Endothelial cell of umbilical vein (primary cell): ENCODE measurements at regions of chr1 and their contacts with region 1.

Region 1: GRCh38 chr1:193143285-193143684 is 21.5 kb downstream of the CDC73 start:
- DNase-seq: peak; percentile 30
- H3K4me3 ChIP-seq: no peak overlapping the region
- H3K27ac ChIP-seq: no peak overlapping the region
- H3K4me1 ChIP-seq: peaks cover 9% of the 10 kb centered on the region
- H3K27me3 ChIP-seq: no peaks in the 10 kb centered on the region
- CTCF ChIP-seq: no peak
- POLR2A ChIP-seq: no peak

Region 2: GRCh38 chr1:193131266-193131860 is 11.9 kb before region 1 on chr1:
- CTCF ChIA-PET with region 1: interaction called, 14 read pairs
- POLR2A ChIA-PET with region 1: no interaction called
- dilution Hi-C with region 1: no loop called
- intact Hi-C with region 1: no loop called
- DNase-seq: no peak
- H3K4me3 ChIP-seq: no peak overlapping the region
- H3K27ac ChIP-seq: no peak overlapping the region
- H3K4me1 ChIP-seq: no peaks in the 10 kb centered on the region
- H3K27me3 ChIP-seq: no peaks in the 10 kb centered on the region
- CTCF ChIP-seq: no peak
- POLR2A ChIP-seq: no peak

Region 3: GRCh38 chr1:193156826-193157142 is 13.5 kb after region 1 on chr1:
- CTCF ChIA-PET with region 1: interaction called, 14 read pairs
- POLR2A ChIA-PET with region 1: no interaction called
- dilution Hi-C with region 1: no loop called
- intact Hi-C with region 1: no loop called
- DNase-seq: no peak
- H3K4me3 ChIP-seq: no peak overlapping the region
- H3K27ac ChIP-seq: no peak overlapping the region
- H3K4me1 ChIP-seq: no peaks in the 10 kb centered on the region
- H3K27me3 ChIP-seq: no peaks in the 10 kb centered on the region
- CTCF ChIP-seq: no peak
- POLR2A ChIP-seq: no peak

Region 4: DNA sequence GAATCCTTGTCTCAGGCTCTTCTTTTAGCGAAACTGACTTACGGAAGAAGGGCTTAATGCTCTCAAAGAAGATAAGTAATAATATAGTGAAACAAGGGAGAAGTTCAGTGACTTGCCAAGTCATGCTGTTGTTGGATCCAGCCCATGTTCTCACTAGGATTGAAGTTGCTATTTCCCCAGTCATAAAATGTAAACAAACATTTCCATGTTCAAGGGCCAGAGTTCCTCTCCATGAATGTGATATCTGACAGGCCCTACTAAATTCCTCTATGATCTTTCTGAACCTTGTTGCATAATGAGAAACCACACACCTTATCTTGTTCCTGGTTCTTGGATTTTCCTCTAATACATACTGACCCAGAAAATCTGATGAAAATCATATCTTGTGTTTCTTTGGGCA is 919.7 kb after region 1 on chr1:
- CTCF ChIA-PET with region 1: interaction called, 3 read pairs
- POLR2A ChIA-PET with region 1: no interaction called
- dilution Hi-C with region 1: no loop called
- intact Hi-C with region 1: loop called (anchors 1 kb)
- DNase-seq: peak; percentile 93
- H3K4me3 ChIP-seq: peak overlapping the region in 1 of 3 experiments; percentile 30
- H3K27ac ChIP-seq: peak overlapping the region; percentile 94
- H3K4me1 ChIP-seq: peaks cover 29% of the 10 kb centered on the region
- H3K27me3 ChIP-seq: no peaks in the 10 kb centered on the region
- CTCF ChIP-seq: no peak
- POLR2A ChIP-seq: no peak